ENCODE measurements at regions of chr12 and their contacts with region 1.

Region 1: DNA sequence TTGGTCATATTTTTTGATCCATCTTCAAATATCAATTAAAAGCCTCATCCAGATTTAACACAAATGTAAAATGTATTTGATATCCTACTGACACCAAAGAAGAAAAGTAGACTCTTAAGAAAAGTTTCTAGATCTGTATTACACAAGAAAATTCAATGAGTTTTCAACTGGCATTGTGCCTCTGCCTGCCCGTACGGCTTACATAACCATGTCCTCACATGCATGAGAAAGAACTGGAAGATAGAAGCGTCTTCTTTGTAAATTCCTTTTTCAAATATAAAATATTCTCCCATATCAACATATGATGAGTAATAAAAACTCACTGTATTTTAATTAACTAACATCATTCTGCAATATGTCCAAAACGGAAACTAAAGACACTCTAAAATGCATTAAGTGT is 7.2 kb downstream of the ANKS1B start:
- DNase-seq: no peak
- H3K4me3 Mint-ChIP-seq: no peak overlapping the region
- H3K27ac Mint-ChIP-seq: no peak overlapping the region
- H3K4me1 Mint-ChIP-seq: no peaks in the 10 kb centered on the region
- H3K27me3 Mint-ChIP-seq: peaks cover 27% of the 10 kb centered on the region

Region 2: GRCh38 chr12:99966429-99966828 is 11.1 kb before region 1 on chr12:
- CTCF ChIA-PET with region 1: no interaction called
- POLR2A ChIA-PET with region 1: no interaction called
- DNase-seq: no peak
- H3K4me3 Mint-ChIP-seq: no peak overlapping the region
- H3K27ac Mint-ChIP-seq: no peak overlapping the region
- H3K4me1 Mint-ChIP-seq: no peaks in the 10 kb centered on the region
- H3K27me3 Mint-ChIP-seq: no peaks in the 10 kb centered on the region

Region 3: DNA sequence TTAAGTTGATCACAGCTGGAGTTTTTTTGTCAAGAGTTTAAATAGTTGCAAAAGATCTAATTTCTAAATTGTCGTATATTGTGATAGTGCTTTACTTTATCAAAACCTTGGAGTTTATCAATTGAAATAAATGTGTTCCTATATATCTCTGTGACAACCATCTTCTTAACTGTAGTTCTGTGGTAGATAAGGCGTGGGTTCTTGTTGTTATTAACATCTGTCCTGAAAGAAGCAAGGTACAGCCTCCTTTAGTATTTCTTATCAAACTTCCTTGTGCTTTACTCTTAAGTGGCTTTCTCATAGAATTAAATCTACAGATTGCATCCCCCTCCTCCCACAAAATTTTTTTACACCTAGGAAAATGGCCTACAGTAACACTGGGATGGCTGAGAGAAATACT is 296.7 kb after region 1 on chr12:
- CTCF ChIA-PET with region 1: no interaction called
- POLR2A ChIA-PET with region 1: interaction called, 13 read pairs
- DNase-seq: no peak
- H3K4me3 Mint-ChIP-seq: no peak overlapping the region
- H3K27ac Mint-ChIP-seq: no peak overlapping the region
- H3K4me1 Mint-ChIP-seq: peaks cover 24% of the 10 kb centered on the region
- H3K27me3 Mint-ChIP-seq: no peaks in the 10 kb centered on the region